ENCODE measurements at regions of chr17 and their contacts with region 1.

Region 1: DNA sequence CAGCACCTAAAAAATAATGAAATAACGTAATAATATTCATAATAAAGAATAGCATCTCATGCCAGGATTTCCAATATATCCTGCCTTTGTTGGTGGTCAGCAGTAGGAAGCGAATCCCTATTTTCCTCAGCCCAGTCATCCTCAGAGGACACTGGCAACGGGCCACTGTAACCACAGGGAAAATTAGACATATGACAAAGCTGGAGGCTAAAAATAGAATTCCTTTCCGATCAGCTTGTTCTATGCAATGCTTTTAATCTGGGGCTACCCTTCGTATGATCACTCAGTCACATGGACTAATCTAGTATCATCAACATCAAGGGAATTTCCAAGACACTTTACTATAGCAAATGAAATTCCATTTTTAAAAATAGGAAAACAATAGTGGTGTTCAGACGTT is 246.9 kb upstream of the KCNJ16 start:
- DNase-seq: no peak
- H3K4me3 ChIP-seq: no peak overlapping the region
- H3K27ac ChIP-seq: no peak overlapping the region
- H3K27me3 ChIP-seq: no peaks in the 10 kb centered on the region
- CTCF ChIP-seq: no peak

Region 2: DNA sequence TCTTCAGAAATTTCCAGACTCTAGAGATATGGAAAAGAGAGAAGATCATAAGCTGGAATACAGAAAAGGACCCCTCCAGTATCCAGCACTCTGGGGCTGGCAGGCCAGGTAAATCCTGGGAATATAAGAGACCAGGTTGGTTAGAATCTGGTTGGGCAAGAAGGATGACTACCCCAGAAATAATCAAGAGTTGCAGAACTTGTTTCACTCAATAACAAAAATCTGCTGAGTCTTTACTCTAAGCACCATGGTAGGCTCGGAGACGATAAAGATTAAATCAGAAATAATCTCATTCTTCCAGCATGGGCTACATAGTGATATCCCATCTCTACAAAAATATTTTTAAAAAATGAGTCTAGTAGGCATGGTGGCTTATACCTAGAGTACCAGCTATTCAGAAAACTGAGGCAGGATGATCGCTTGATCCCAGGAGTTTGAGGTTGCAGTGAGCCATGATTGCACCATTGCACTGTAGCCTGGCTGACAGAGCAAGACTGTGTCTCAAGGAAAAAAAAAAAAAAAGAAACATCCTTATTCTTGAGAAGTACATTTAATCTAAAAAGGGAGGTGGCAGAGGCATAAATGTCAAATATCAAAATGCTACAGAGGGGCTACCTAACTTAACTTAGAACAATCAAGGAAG is 109.0 kb after region 1 on chr17:
- CTCF ChIA-PET with region 1: no interaction called
- POLR2A ChIA-PET with region 1: no interaction called
- DNase-seq: no peak
- H3K4me3 ChIP-seq: no peak overlapping the region
- H3K27ac ChIP-seq: no peak overlapping the region
- H3K27me3 ChIP-seq: no peaks in the 10 kb centered on the region
- CTCF ChIP-seq: no peak

Region 3: DNA sequence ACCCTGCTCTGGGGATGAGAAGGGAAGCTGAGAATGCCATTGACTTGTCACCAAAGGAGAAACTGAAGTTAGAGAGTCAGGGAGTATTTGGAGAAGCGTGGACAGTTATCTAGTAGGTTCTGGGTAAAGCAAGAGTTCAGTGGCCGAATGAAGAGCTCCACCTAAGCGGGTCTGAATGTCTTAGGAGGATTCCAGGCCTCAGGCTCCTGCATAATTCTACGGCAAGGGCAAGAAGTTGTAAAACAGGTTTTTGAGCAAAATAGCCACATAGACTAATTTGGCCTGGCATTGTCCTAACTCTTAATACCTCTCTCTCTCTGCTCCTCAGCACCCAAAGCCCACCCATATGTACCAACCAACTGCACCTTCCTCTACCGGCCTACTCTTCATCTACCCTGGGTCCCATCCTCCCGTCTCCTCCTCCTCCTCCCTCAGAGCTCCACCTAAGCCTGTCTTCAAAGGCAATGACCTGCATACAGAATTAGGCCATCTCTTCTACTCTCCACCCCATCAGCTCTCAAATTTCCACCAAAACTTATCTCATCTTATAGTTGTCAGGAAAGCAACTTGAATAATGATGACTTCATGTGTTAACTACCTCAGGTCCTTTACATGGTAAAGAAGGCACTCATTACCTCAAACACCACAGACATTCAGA is 299.3 kb after region 1 on chr17:
- CTCF ChIA-PET with region 1: no interaction called
- POLR2A ChIA-PET with region 1: interaction called, 11 read pairs
- DNase-seq: no peak
- H3K4me3 ChIP-seq: no peak overlapping the region
- H3K27ac ChIP-seq: no peak overlapping the region
- H3K27me3 ChIP-seq: no peaks in the 10 kb centered on the region
- CTCF ChIP-seq: no peak